ENCODE measurements at regions of chr3 and their contacts with region 1.

Region 1: DNA sequence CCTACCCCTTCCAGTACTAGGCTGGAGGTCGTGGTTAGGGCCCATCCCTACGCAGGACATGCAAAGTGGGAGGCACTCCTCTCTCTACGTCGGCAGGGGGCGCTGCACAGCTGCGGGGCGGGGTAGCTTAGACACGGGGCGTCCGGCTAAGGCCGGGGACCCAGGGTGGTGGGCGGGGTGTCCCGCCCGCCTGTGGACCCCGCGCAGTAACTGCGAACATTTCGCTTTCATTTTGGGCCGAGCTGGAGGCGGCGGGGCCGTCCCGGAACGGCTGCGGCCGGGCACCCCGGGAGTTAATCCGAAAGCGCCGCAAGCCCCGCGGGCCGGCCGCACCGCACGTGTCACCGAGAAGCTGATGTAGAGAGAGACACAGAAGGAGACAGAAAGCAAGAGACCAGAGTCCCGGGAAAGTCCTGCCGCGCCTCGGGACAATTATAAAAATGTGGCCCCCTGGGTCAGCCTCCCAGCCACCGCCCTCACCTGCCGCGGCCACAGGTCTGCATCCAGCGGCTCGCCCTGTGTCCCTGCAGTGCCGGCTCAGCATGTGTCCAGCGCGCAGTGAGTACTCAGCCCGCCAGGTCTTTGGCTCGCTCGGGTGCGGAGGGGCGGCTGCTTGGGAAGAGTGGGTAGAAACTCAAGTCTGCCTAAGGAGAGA is at the start of gene IL12A:
- DNase-seq: peak; percentile 92
- ATAC-seq: peak; percentile 97
- H3K4me3 ChIP-seq: peak within 1 kb of the TSS; percentile 49 to 87 (median 81)
- H3K4me3 Mint-ChIP-seq: peak within 1 kb of the TSS; percentile 93
- H3K27ac ChIP-seq: peak within 1 kb of the TSS; percentile 59 to 70
- H3K27ac Mint-ChIP-seq: peak within 1 kb of the TSS; percentile 89
- H3K4me1 ChIP-seq: peaks cover 15 to 29% of the 10 kb centered on the region in 2 donors
- H3K4me1 Mint-ChIP-seq: peaks cover 47% of the 10 kb centered on the region
- H3K27me3 ChIP-seq: no peaks in the 10 kb centered on the region
- H3K27me3 Mint-ChIP-seq: no peaks in the 10 kb centered on the region
- CTCF ChIP-seq: peak; percentile 98
- total RNA-seq, gene IL12A: 4.3 and 6.1 TPM in 2 replicates

Region 2: DNA sequence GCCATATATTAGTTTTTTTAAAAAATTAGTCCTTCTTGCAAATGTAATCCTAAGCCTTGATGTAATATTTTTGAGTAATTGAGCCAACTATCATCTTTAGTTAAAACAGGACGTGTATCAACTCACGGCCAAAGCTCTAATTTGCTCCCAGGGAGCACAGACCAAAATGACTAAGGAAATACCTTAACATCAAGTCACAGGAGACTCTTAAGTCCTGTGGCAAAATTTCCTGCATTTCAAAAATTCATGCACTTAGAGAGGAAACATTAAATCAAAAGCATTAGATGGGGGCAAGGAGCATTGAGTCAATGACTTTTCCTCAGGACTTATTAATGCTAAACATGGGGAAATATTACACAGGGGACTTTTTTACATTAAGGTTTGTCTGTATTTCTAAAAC is 910.9 kb before region 1 on chr3:
- CTCF ChIA-PET with region 1: no interaction called
- POLR2A ChIA-PET with region 1: no interaction called
- intact Hi-C with region 1: no loop called
- DNase-seq: no peak
- ATAC-seq: no peak
- H3K4me3 ChIP-seq: no peak overlapping the region
- H3K4me3 Mint-ChIP-seq: no peak overlapping the region
- H3K27ac ChIP-seq: no peak overlapping the region
- H3K27ac Mint-ChIP-seq: no peak overlapping the region
- H3K4me1 ChIP-seq: no peaks in the 10 kb centered on the region
- H3K4me1 Mint-ChIP-seq: no peaks in the 10 kb centered on the region
- H3K27me3 ChIP-seq: no peaks in the 10 kb centered on the region
- H3K27me3 Mint-ChIP-seq: no peaks in the 10 kb centered on the region
- CTCF ChIP-seq: no peak

Region 3: DNA sequence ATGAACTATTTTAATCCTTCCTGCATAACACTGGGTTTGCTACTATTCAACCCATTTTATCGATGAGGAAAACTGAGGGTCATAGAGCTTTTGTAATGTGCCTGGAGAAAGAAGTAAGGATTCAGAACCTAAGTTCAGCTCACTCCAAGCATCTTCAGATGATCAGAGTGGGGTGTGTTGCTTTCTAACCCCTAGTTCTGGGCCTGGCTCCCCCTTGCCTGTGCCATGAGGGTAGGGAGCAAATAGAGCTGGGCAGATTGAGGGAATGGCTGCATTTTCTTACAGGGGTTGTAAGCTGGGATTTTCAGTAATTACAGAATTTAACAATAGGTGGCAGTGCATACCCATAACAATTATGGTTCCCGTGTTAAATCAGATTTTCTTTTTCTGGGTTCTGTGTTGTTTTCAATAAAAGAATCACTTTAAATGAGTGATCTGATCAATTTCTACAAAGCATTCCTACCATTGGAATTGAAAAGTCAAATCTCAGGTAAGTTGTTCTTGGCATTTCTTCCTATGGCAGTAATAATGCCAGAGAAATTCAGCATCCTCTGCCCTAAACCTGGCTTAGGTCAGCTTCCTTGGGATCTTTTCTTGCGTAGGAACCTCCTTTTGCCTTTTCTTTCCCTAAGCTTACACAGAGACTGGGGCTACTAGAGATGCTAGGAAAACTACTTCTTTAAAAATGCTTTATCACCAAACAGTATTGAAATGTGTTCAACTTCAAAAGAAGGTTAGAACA is 103.9 kb before region 1 on chr3:
- CTCF ChIA-PET with region 1: interaction called, 41 read pairs
- POLR2A ChIA-PET with region 1: no interaction called
- intact Hi-C with region 1: loop called (anchors 5 kb)
- DNase-seq: peak; percentile 64
- ATAC-seq: peak; percentile 49
- H3K4me3 ChIP-seq: no peak overlapping the region
- H3K4me3 Mint-ChIP-seq: no peak overlapping the region
- H3K27ac ChIP-seq: no peak overlapping the region
- H3K27ac Mint-ChIP-seq: no peak overlapping the region
- H3K4me1 ChIP-seq: no peaks in the 10 kb centered on the region
- H3K4me1 Mint-ChIP-seq: no peaks in the 10 kb centered on the region
- H3K27me3 ChIP-seq: no peaks in the 10 kb centered on the region
- H3K27me3 Mint-ChIP-seq: peaks cover 6% of the 10 kb centered on the region
- CTCF ChIP-seq: peak; percentile 88

Region 4: DNA sequence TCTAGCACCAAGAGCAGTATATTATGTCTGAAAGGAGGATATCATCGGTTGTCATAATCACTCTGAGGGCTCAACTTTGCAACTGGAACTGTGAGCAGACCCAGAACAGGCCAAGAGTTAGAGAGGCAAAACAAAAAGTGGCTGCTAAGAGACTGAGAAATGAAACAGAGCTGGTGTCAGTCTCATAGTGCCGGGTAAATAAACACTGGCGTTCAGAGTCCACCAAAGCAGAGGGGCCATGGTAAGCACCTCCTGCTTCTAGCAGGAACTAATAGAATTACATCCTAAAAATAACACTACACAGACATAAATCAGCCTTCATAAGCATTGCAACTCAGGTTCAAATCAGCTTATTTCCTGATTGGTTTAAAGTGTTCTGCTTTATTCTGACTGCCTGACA is 10.4 kb before region 1 on chr3:
- CTCF ChIA-PET with region 1: interaction called, 10 read pairs
- POLR2A ChIA-PET with region 1: no interaction called
- intact Hi-C with region 1: no loop called
- DNase-seq: no peak
- ATAC-seq: no peak
- H3K4me3 ChIP-seq: no peak overlapping the region
- H3K4me3 Mint-ChIP-seq: no peak overlapping the region
- H3K27ac ChIP-seq: no peak overlapping the region
- H3K27ac Mint-ChIP-seq: no peak overlapping the region
- H3K4me1 ChIP-seq: no peaks in the 10 kb centered on the region
- H3K4me1 Mint-ChIP-seq: no peaks in the 10 kb centered on the region
- H3K27me3 ChIP-seq: peaks cover 0 to 10% (median 2%) of the 10 kb centered on the region in 4 experiments
- H3K27me3 Mint-ChIP-seq: peaks cover 17% of the 10 kb centered on the region
- CTCF ChIP-seq: no peak

Region 5: DNA sequence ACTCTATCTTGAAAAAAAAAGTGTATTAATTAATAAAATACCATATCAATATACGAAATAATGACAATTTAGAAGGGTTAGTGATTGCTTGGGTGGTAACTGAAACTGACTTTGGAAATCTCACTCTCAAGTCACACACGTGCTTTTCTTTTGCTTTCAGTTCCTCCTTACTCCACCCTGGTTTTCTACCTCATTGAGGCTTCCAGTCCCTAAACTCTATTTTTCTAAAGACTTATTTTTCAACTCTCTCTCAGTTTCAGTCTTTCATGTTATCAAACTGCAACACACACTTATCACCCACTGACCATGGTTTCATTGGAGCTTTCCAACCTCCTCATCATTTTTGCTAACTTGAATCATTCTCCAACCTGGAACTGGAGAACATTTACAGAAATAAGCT is 23.4 kb after region 1 on chr3:
- CTCF ChIA-PET with region 1: interaction called, 140 read pairs
- POLR2A ChIA-PET with region 1: no interaction called
- intact Hi-C with region 1: loop called (anchors 1 kb)
- DNase-seq: peak; percentile 72
- ATAC-seq: peak; percentile 88
- H3K4me3 ChIP-seq: peak overlapping the region in 2 of 5 experiments; percentile 6 to 16
- H3K4me3 Mint-ChIP-seq: peak overlapping the region; percentile 33
- H3K27ac ChIP-seq: peak overlapping the region; percentile 81 to 90
- H3K27ac Mint-ChIP-seq: peak overlapping the region; percentile 75
- H3K4me1 ChIP-seq: peaks cover 25 to 33% of the 10 kb centered on the region in 2 donors
- H3K4me1 Mint-ChIP-seq: peaks cover 34% of the 10 kb centered on the region
- H3K27me3 ChIP-seq: no peaks in the 10 kb centered on the region
- H3K27me3 Mint-ChIP-seq: no peaks in the 10 kb centered on the region
- CTCF ChIP-seq: no peak

Region 6: DNA sequence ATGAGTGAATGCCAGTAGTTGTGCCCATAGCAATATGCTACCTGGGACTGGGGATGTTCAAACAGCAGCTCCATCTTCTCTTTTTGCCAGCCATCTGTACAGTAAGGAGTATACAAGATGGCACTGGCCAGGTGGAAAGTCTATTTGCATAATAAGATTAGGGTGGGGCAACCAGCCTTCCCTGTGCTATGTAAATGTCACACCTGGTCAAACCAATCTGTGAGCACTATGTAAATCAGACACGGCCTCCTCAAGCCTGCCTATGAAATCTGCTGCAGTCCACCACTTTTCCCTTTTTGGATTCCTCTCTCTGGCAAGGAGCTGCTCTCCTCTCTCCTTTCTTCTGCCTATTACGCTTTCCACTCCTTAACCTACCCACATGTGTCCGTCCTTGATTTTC is 289.5 kb after region 1 on chr3:
- CTCF ChIA-PET with region 1: no interaction called
- POLR2A ChIA-PET with region 1: no interaction called
- intact Hi-C with region 1: no loop called
- DNase-seq: no peak
- ATAC-seq: no peak
- H3K4me3 ChIP-seq: no peak overlapping the region
- H3K4me3 Mint-ChIP-seq: no peak overlapping the region
- H3K27ac ChIP-seq: no peak overlapping the region
- H3K27ac Mint-ChIP-seq: no peak overlapping the region
- H3K4me1 ChIP-seq: no peaks in the 10 kb centered on the region
- H3K4me1 Mint-ChIP-seq: no peaks in the 10 kb centered on the region
- H3K27me3 ChIP-seq: no peaks in the 10 kb centered on the region
- H3K27me3 Mint-ChIP-seq: no peaks in the 10 kb centered on the region
- CTCF ChIP-seq: no peak

Region 7: GRCh38 chr3:160413613-160414248 is 425.0 kb after region 1 on chr3:
- CTCF ChIA-PET with region 1: interaction called, 48 read pairs
- POLR2A ChIA-PET with region 1: no interaction called
- intact Hi-C with region 1: loop called (anchors 1 kb)
- DNase-seq: peak; percentile 78
- ATAC-seq: peak; percentile 80
- H3K4me3 ChIP-seq: no peak overlapping the region
- H3K4me3 Mint-ChIP-seq: no peak overlapping the region
- H3K27ac ChIP-seq: no peak overlapping the region
- H3K27ac Mint-ChIP-seq: no peak overlapping the region
- H3K4me1 ChIP-seq: no peaks in the 10 kb centered on the region
- H3K4me1 Mint-ChIP-seq: no peaks in the 10 kb centered on the region
- H3K27me3 ChIP-seq: no peaks in the 10 kb centered on the region
- H3K27me3 Mint-ChIP-seq: no peaks in the 10 kb centered on the region
- CTCF ChIP-seq: peak; percentile 98

Region 8: GRCh38 chr3:160754855-160755747 is 766.4 kb after region 1 on chr3:
- CTCF ChIA-PET with region 1: no interaction called
- POLR2A ChIA-PET with region 1: no interaction called
- intact Hi-C with region 1: loop called (anchors 5 kb)
- DNase-seq: peak; percentile 93
- ATAC-seq: peak; percentile 81
- H3K4me3 ChIP-seq: peak overlapping the region; percentile 68 to 86 (median 81)
- H3K4me3 Mint-ChIP-seq: peak overlapping the region; percentile 98
- H3K27ac ChIP-seq: peak overlapping the region; percentile 72 to 82
- H3K27ac Mint-ChIP-seq: peak overlapping the region; percentile 95
- H3K4me1 ChIP-seq: peaks cover 25% of the 10 kb centered on the region in 2 donors
- H3K4me1 Mint-ChIP-seq: peaks cover 31% of the 10 kb centered on the region
- H3K27me3 ChIP-seq: peaks cover 0 to 11% (median 4%) of the 10 kb centered on the region in 4 experiments
- H3K27me3 Mint-ChIP-seq: peaks cover 21% of the 10 kb centered on the region
- CTCF ChIP-seq: no peak

Measured in B cell (primary cell).